Esophagus squamous epithelium (tissue), 5 donors: ENCODE measurements at regions of chr1 and their contacts with region 1.

Region 1: GRCh38 chr1:204503122-204503912 is 8.7 kb upstream of the PIK3C2B start:
- DNase-seq: no peak
- H3K4me3 ChIP-seq: no peak overlapping the region
- H3K27ac ChIP-seq: no peak overlapping the region
- H3K4me1 ChIP-seq: peaks cover 0 to 34% (median 3%) of the 10 kb centered on the region in 3 donors
- H3K27me3 ChIP-seq: no peaks in the 10 kb centered on the region
- CTCF ChIP-seq: peak in 5 of 6 experiments; percentile 73 to 89 (median 84)
- POLR2A ChIP-seq: no peak

Region 2: DNA sequence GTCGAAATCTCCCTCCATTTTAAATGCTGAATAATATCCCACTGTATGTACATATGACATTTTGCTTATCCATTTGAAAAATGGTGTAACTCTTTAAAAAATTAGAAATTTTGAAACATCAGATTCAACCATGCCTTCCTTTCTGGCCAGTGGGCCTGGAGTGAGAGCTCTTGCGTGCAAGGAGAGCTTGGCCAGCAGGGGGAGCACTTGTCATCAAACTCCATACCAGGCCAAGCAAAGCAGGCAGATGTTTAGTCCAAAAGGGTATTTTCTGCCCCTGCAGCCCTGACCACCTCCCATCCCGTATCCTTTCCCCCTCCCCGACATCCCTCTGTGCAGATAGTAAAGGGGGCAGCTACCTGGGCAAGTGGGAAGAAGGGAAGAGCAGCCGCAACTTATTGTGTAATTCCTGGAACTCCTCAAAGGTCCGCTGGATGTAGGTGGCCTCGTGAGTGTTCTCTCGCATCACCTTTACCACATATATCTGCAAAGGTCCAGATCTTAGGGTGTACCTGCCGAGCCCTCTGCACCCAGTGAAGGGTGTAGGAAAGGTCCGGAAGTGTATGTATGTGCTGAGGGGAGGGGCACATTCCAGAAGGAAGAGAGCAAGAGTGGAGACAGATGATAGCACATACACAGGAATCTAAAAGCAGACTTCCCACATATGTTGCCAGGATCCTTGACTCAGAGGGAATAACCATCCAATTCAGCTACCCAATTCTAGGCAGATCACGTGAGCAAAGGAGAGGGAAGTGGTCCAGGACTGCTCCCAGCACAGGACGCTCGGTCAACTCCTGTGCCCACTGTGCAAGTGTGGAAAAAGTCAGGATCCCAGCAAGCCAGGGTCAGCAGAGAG is 71.8 kb before region 1 on chr1:
- intact Hi-C with region 1: loop called (anchors 5 kb)
- DNase-seq: peak; percentile 43
- H3K4me3 ChIP-seq: no peak overlapping the region
- H3K27ac ChIP-seq: peak overlapping the region in 3 of 4 donors; percentile 11 to 60 (median 39)
- H3K4me1 ChIP-seq: peaks cover 7 to 47% (median 19%) of the 10 kb centered on the region in 3 donors
- H3K27me3 ChIP-seq: no peaks in the 10 kb centered on the region
- CTCF ChIP-seq: peak; percentile 65 to 94 (median 89)
- POLR2A ChIP-seq: no peak

Region 3: GRCh38 chr1:204868340-204868700 is 365.0 kb after region 1 on chr1:
- intact Hi-C with region 1: no loop called
- DNase-seq: no peak
- H3K4me3 ChIP-seq: no peak overlapping the region
- H3K27ac ChIP-seq: peak overlapping the region in 1 of 4 donors; percentile 29
- H3K4me1 ChIP-seq: peaks cover 0 to 23% (median 0%) of the 10 kb centered on the region in 3 donors
- H3K27me3 ChIP-seq: no peaks in the 10 kb centered on the region
- CTCF ChIP-seq: no peak
- POLR2A ChIP-seq: no peak